Activated T-helper 1 cell treated with anti-CD3 and anti-CD28 coated beads, Interleukin-12 subunit alpha, Interleukin-12 subunit beta, Interleukin-2, Interleukin-4 antibody, amounts not matched to agents 30 ng/mL and 10 ng/mL and 1 ng/mL, durations not matched to agents 14 hours and 24 hours and 36 hours (primary cell): ENCODE measurements at regions of chr6 and their contacts with region 1.

Region 1: GRCh38 chr6:96468681-96469224 is 52.9 kb upstream of the UFL1 start:
- DNase-seq: no peak
- H3K4me3 Mint-ChIP-seq: no peak overlapping the region
- H3K27ac Mint-ChIP-seq: no peak overlapping the region
- H3K4me1 Mint-ChIP-seq: peaks cover 33% of the 10 kb centered on the region
- H3K27me3 Mint-ChIP-seq: peaks cover 19% of the 10 kb centered on the region

Region 2: DNA sequence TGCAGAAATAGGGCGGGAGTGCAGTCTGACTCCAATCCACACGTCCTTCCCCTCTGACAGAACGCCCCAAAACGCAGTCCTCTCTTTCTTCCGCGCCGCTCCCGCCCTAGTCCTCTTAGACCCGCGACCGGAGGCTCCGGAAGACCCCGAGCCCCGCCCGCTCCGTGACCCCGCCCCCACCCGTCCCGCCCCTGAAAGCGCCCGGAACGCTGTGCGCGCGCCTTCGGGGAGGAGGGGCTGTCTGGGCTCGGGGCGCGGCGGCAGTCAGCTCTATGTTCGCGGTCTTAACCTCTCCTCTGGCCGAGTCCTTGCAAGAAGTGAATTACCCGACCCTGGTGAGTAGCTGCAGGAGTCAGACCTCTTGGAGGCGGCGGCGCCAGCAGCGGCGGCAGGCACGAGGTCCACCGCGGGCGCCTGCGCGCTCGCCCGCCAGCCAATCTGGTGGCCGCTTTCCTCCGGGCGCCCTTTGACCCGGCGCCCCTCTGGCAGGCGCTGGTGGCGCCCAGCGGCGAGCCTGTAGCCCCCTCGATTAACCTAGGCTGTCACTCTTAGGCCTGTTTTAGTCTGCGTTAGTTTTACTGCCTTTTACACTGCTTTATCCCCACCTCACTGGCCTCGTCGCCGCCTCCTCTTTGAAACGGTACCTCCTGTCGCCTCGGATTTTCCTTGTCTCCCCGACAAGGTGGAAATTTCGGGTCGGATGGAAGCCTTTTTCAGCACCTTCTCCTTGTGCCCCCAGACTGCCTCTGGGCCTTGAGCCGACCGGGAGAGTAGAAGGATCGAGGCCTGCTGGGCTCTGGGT is 891.2 kb before region 1 on chr6 and contains the start of gene MANEA:
- intact Hi-C with region 1: loop called (anchors 5 kb)
- DNase-seq: peak; percentile 77
- H3K4me3 Mint-ChIP-seq: peak within 1 kb of the TSS; percentile 91
- H3K27ac Mint-ChIP-seq: peak within 1 kb of the TSS; percentile 98
- H3K4me1 Mint-ChIP-seq: peaks cover 46% of the 10 kb centered on the region
- H3K27me3 Mint-ChIP-seq: peaks cover 1% of the 10 kb centered on the region
- total RNA-seq, gene MANEA: 23.1 and 26.8 TPM in 2 replicates

Region 3: DNA sequence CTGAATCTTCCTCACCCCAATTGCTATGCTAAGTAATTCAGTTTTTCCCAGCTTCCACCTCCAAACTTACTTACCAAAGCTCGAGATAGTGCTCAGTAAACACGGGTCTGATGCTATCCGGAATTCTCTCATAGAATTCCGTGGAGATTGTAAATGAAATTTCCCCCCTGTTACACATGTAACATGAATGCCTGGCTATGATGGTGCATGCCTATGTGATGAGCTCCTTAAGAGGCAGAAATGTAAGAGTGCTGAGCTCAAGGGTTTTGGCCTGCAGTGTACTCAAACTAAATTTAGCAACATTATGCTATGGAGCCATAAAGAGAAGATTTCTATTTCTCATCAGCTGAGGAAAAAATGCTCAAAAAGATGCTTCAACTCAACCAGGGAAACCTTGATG is 586.4 kb before region 1 on chr6:
- intact Hi-C with region 1: no loop called
- DNase-seq: no peak
- H3K4me3 Mint-ChIP-seq: no peak overlapping the region
- H3K27ac Mint-ChIP-seq: no peak overlapping the region
- H3K4me1 Mint-ChIP-seq: no peaks in the 10 kb centered on the region
- H3K27me3 Mint-ChIP-seq: no peaks in the 10 kb centered on the region

Region 4: GRCh38 chr6:95978230-95978629 is 490.5 kb before region 1 on chr6:
- intact Hi-C with region 1: no loop called
- DNase-seq: no peak
- H3K4me3 Mint-ChIP-seq: no peak overlapping the region
- H3K27ac Mint-ChIP-seq: no peak overlapping the region
- H3K4me1 Mint-ChIP-seq: no peaks in the 10 kb centered on the region
- H3K27me3 Mint-ChIP-seq: no peaks in the 10 kb centered on the region

Region 5: DNA sequence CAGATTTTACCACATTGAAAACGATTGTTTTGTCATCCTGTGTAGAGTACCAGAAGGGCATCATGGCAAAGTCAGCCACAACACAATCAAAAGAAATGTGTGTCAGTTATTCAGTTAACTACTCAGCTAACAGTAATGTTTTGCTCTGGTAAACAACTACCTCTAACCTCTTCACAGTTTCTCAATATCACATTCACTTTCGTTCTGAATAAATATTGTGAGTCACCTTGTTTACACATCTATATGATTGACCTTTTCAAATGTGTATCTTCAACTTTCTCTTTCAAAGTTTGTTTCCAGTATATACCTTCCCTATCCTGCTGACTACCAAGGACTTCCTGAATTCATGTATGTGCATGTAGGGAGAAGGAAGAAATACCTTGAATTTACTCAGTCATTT is 163.8 kb before region 1 on chr6:
- intact Hi-C with region 1: loop called (anchors 1 kb)
- DNase-seq: no peak
- H3K4me3 Mint-ChIP-seq: no peak overlapping the region
- H3K27ac Mint-ChIP-seq: no peak overlapping the region
- H3K4me1 Mint-ChIP-seq: peaks cover 5% of the 10 kb centered on the region
- H3K27me3 Mint-ChIP-seq: no peaks in the 10 kb centered on the region

Region 6: DNA sequence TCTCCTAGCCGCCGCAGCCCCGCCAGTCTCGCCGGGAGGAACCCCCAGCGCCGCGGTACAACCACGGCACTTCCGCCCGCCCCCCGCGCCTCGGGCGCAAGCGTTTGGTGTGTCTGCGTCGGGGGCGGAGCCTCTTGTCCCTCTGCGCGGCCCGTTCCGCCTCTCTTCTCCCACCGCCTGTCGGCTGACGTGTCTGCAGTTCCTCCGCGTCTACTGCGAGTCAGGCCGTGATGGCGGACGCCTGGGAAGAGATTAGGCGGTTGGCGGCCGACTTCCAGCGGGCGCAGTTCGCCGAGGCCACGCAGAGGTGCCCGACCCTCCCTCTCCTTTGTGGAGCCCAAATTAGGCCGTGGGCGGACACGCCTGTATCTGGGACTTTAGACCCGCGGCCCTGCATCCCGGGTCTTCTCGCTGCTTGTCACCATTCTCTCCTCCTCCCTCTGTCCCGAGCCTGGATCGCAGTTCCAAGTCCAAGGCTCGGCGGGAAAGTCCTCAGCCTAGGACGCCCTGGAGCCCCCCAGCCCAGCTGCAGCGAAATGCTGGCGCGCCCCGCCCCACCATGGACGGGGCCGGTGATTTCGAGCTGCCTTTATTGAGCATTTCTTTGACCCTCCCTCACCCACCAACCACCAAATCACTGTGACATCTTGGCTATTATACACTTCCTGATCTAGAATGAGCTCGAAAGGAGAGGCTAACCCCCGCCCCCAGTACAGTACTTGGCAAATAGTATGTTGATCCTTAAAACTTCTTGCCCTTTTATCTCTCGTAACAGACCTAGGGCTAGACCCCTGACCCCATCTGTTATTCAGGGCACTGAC is 53.1 kb after region 1 on chr6 and contains the start of gene UFL1:
- intact Hi-C with region 1: loop called (anchors 1 kb)
- DNase-seq: peak; percentile 89
- H3K4me3 Mint-ChIP-seq: peak within 1 kb of the TSS; percentile 100
- H3K27ac Mint-ChIP-seq: peak within 1 kb of the TSS; percentile 100
- H3K4me1 Mint-ChIP-seq: peaks cover 24% of the 10 kb centered on the region
- H3K27me3 Mint-ChIP-seq: no peaks in the 10 kb centered on the region
- total RNA-seq, gene UFL1: 22.0 and 22.7 TPM in 2 replicates

Region 7: DNA sequence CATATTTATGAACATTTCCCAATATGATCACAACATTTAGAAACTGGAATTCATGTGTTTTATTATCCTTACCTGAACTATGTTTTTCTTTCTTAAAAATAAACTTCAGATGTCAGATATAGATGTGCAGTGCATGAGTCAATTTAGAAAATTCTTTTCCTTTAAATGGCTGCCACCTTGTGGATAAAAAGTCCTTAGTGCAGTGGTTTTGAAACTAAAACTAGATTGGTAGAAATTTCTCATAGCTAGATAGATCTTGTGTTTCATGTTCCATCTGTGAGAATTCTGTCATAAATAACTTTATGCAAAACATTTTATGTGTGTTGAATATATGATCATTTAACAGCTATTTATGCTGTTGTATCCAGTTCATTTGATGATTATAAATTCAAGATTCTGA is 590.7 kb after region 1 on chr6:
- intact Hi-C with region 1: loop called (anchors 10 kb)
- DNase-seq: no peak
- H3K4me3 Mint-ChIP-seq: no peak overlapping the region
- H3K27ac Mint-ChIP-seq: no peak overlapping the region
- H3K4me1 Mint-ChIP-seq: no peaks in the 10 kb centered on the region
- H3K27me3 Mint-ChIP-seq: peaks cover 3% of the 10 kb centered on the region